ENCODE measurements at regions of chr5 and their contacts with region 1.

Region 1: GRCh38 chr5:137651022-137651421 is 84.9 kb downstream of the KLHL3 start:
- DNase-seq: no peak
- ATAC-seq: no peak
- H3K4me3 ChIP-seq: no peak overlapping the region
- H3K27ac ChIP-seq: no peak overlapping the region
- H3K4me1 ChIP-seq: no peaks in the 10 kb centered on the region
- H3K27me3 ChIP-seq: no peaks in the 10 kb centered on the region
- CTCF ChIP-seq: no peak

Region 2: GRCh38 chr5:137370096-137371071 is 280.6 kb before region 1 on chr5:
- intact Hi-C with region 1: no loop called
- DNase-seq: no peak
- ATAC-seq: no peak
- H3K4me3 ChIP-seq: no peak overlapping the region
- H3K27ac ChIP-seq: no peak overlapping the region
- H3K4me1 ChIP-seq: no peaks in the 10 kb centered on the region
- H3K27me3 ChIP-seq: no peaks in the 10 kb centered on the region
- CTCF ChIP-seq: no peak

Region 3: GRCh38 chr5:137743031-137743640 is 92.1 kb after region 1 on chr5:
- intact Hi-C with region 1: loop called (anchors 10 kb)
- DNase-seq: no peak
- ATAC-seq: peak; percentile 77 to 81
- H3K4me3 ChIP-seq: no peak overlapping the region
- H3K27ac ChIP-seq: no peak overlapping the region
- H3K4me1 ChIP-seq: no peaks in the 10 kb centered on the region
- H3K27me3 ChIP-seq: no peaks in the 10 kb centered on the region
- CTCF ChIP-seq: peak; percentile 58

Region 4: GRCh38 chr5:137808503-137809205 is 157.6 kb after region 1 on chr5:
- intact Hi-C with region 1: no loop called
- DNase-seq: no peak
- ATAC-seq: no peak
- H3K4me3 ChIP-seq: no peak overlapping the region
- H3K27ac ChIP-seq: no peak overlapping the region
- H3K4me1 ChIP-seq: no peaks in the 10 kb centered on the region
- H3K27me3 ChIP-seq: no peaks in the 10 kb centered on the region
- CTCF ChIP-seq: no peak

Region 5: DNA sequence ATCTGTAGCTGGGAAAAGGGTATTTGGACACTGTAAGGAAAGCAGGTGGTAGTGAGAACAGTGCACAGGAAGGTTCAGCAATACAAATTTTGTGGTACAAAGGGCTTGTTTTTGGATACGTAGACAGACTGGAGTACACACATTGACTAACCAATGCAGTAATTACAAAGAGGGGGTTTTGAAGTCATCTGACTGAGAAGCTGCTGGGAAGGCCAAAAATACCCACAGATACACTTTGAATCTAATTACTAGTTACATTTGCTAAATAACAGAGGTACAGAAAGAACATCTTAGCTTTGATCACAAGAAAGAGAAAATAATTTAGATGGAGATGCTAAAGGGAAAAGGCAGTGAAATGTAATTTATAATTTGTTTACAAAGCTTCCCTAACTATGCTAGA is 284.2 kb after region 1 on chr5:
- intact Hi-C with region 1: no loop called
- DNase-seq: no peak
- ATAC-seq: no peak
- H3K4me3 ChIP-seq: no peak overlapping the region
- H3K27ac ChIP-seq: no peak overlapping the region
- H3K4me1 ChIP-seq: no peaks in the 10 kb centered on the region
- H3K27me3 ChIP-seq: no peaks in the 10 kb centered on the region
- CTCF ChIP-seq: no peak